Mammary epithelial cell (primary cell): ENCODE measurements at regions of chr11 and their contacts with region 1.

Region 1: GRCh38 chr11:5808500-5809121 is at the start of gene OR52N2:
- DNase-seq: peak; percentile 51
- H3K4me3 ChIP-seq: peak within 1 kb of the TSS; percentile 37 to 48 (median 46)
- H3K27ac ChIP-seq: no peak within 1 kb of the TSS
- H3K4me1 ChIP-seq: no peaks in the 10 kb centered on the region
- H3K27me3 ChIP-seq: peaks cover 4% of the 10 kb centered on the region
- CTCF ChIP-seq: peak; percentile 77 to 80
- total RNA-seq, gene OR52N2: not detected

Region 2: GRCh38 chr11:5123802-5124521 is 684.6 kb before region 1 on chr11:
- CTCF ChIA-PET with region 1: no interaction called
- dilution Hi-C with region 1: no loop called
- in situ Hi-C with region 1: no loop called
- intact Hi-C with region 1: loop called (anchors 2 kb)
- DNase-seq: peak; percentile 51
- H3K4me3 ChIP-seq: no peak overlapping the region
- H3K27ac ChIP-seq: no peak overlapping the region
- H3K4me1 ChIP-seq: no peaks in the 10 kb centered on the region
- H3K27me3 ChIP-seq: no peaks in the 10 kb centered on the region
- CTCF ChIP-seq: peak; percentile 76 to 88

Region 3: DNA sequence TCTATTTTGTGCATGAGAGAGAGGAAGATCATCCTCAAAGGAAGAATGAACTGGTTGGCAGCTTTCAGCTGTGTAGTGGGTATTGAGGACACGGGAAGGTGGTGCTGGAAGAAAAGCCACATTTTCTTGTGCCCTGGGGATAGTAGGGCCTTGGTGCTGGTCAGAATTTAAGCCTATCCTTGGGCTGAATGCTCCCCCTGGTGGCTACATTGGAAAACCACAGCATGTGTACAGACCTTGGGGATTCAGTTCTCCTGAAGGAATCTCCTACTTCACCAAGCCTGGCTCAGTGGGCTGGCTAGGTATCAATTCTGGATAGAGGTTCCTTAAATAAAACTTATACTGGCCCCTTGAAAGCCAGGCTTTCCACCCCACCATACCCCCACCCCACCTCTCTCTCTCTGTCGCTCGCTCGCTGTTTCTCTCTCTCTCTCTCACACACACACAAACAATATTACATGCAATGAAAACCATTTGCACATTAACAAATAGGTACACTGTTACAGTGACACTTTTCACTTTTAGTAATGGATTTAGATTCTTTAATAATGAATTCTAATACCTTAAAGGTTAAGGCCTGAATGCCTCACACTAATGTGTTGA is 427.8 kb before region 1 on chr11:
- CTCF ChIA-PET with region 1: no interaction called
- dilution Hi-C with region 1: no loop called
- in situ Hi-C with region 1: no loop called
- intact Hi-C with region 1: loop called (anchors 1 kb)
- DNase-seq: peak; percentile 35
- H3K4me3 ChIP-seq: no peak overlapping the region
- H3K27ac ChIP-seq: no peak overlapping the region
- H3K4me1 ChIP-seq: no peaks in the 10 kb centered on the region
- H3K27me3 ChIP-seq: no peaks in the 10 kb centered on the region
- CTCF ChIP-seq: peak; percentile 78 to 88

Region 4: GRCh38 chr11:5550440-5551095 is 258.0 kb before region 1 on chr11:
- CTCF ChIA-PET with region 1: interaction called, 3 read pairs
- dilution Hi-C with region 1: no loop called
- in situ Hi-C with region 1: no loop called
- intact Hi-C with region 1: loop called (anchors 1 kb)
- DNase-seq: peak; percentile 68
- H3K4me3 ChIP-seq: no peak overlapping the region
- H3K27ac ChIP-seq: peak overlapping the region; percentile 33
- H3K4me1 ChIP-seq: peaks cover 10% of the 10 kb centered on the region
- H3K27me3 ChIP-seq: no peaks in the 10 kb centered on the region
- CTCF ChIP-seq: no peak

Region 5: GRCh38 chr11:5684646-5685362 is 123.8 kb before region 1 on chr11 and contains the start of gene TRIM5:
- CTCF ChIA-PET with region 1: no interaction called
- dilution Hi-C with region 1: no loop called
- in situ Hi-C with region 1: no loop called
- intact Hi-C with region 1: loop called (anchors 1 kb)
- DNase-seq: peak; percentile 93
- H3K4me3 ChIP-seq: peak within 1 kb of the TSS; percentile 50 to 53 (median 50)
- H3K27ac ChIP-seq: peak within 1 kb of the TSS; percentile 71
- H3K4me1 ChIP-seq: peaks cover 19% of the 10 kb centered on the region
- H3K27me3 ChIP-seq: no peaks in the 10 kb centered on the region
- CTCF ChIP-seq: peak; percentile 45 to 79
- total RNA-seq, gene TRIM5: 19.8 to 28.3 TPM

Region 6: GRCh38 chr11:5712507-5712906 is 96.1 kb before region 1 on chr11:
- CTCF ChIA-PET with region 1: no interaction called
- dilution Hi-C with region 1: no loop called
- in situ Hi-C with region 1: no loop called
- intact Hi-C with region 1: no loop called
- DNase-seq: no peak
- H3K4me3 ChIP-seq: no peak overlapping the region
- H3K27ac ChIP-seq: no peak overlapping the region
- H3K4me1 ChIP-seq: no peaks in the 10 kb centered on the region
- H3K27me3 ChIP-seq: no peaks in the 10 kb centered on the region
- CTCF ChIP-seq: peak; percentile 58 to 60